Dorsolateral prefrontal cortex (tissue), 120 donors: ENCODE measurements at regions of chr2 and their contacts with region 1.

Region 1: GRCh38 chr2:26846328-26847306 is 1.3 kb upstream of the DPYSL5 start:
- DNase-seq: peak; percentile 72 to 89 (median 82)
- H3K4me3 ChIP-seq: peak overlapping the region in 57 of 59 donors; percentile 0 to 85 (median 73)
- H3K27ac ChIP-seq: peak overlapping the region in 57 of 59 donors; percentile 19 to 93 (median 85)
- H3K27me3 ChIP-seq: peaks cover 0 to 33% (median 4%) of the 10 kb centered on the region in 45 donors
- CTCF ChIP-seq: peak; percentile 72 to 98 (median 90)

Region 2: GRCh38 chr2:26816893-26817292 is 29.7 kb before region 1 on chr2:
- intact Hi-C with region 1: no loop called
- DNase-seq: no peak
- H3K4me3 ChIP-seq: no peak overlapping the region
- H3K27ac ChIP-seq: no peak overlapping the region
- H3K27me3 ChIP-seq: peaks cover 0 to 1% (median 0%) of the 10 kb centered on the region in 45 donors
- CTCF ChIP-seq: no peak

Region 3: GRCh38 chr2:26922405-26923188 is 76.0 kb after region 1 on chr2:
- intact Hi-C with region 1: loop called (anchors 2 kb)
- DNase-seq: peak; percentile 67 to 91 (median 84)
- H3K4me3 ChIP-seq: peak overlapping the region in 12 of 59 donors; percentile 2 to 41 (median 12)
- H3K27ac ChIP-seq: peak overlapping the region in 55 of 59 donors; percentile 11 to 94 (median 69)
- H3K27me3 ChIP-seq: no peaks in the 10 kb centered on the region
- CTCF ChIP-seq: peak; percentile 37 to 89 (median 78)

Region 4: GRCh38 chr2:26942543-26943295 is 96.1 kb after region 1 on chr2:
- intact Hi-C with region 1: loop called (anchors 1 to 2 kb)
- DNase-seq: peak; percentile 72 to 90 (median 80)
- H3K4me3 ChIP-seq: no peak overlapping the region
- H3K27ac ChIP-seq: peak overlapping the region in 15 of 59 donors; percentile 11 to 64 (median 43)
- H3K27me3 ChIP-seq: no peaks in the 10 kb centered on the region
- CTCF ChIP-seq: peak; percentile 77 to 95 (median 90)

Region 5: DNA sequence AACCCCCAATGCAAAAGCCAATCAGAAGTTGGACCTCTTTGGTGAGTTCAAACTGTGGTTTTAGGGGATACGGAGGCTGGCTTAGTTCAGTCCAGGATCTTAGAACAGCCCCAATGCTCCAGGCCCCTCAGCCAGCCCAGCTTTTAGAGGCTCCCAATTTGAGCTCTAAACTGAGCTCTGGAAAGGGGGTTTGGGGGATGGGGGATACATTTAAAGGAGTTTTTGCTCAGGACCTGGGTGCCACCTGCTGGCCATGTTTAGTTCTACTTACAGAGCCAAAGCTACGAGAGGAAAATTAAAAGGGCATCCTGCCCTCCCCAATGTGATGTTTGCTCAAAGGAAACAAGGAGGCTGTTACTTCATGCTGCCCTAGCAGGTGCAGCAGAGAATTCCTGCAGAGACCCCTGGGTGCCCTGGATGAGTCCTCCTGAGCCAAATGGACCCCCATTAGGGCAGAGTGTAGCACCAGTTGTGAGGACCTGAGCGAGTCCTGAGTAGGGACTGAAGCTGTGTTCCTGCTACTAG is 170.2 kb after region 1 on chr2:
- intact Hi-C with region 1: loop called (anchors 2 to 10 kb)
- DNase-seq: peak in 6 of 10 donors; percentile 28 to 67 (median 56)
- H3K4me3 ChIP-seq: no peak overlapping the region
- H3K27ac ChIP-seq: no peak overlapping the region
- H3K27me3 ChIP-seq: no peaks in the 10 kb centered on the region
- CTCF ChIP-seq: peak; percentile 47 to 85 (median 75)

Region 6: GRCh38 chr2:27291865-27292264 is 445.2 kb after region 1 on chr2:
- intact Hi-C with region 1: loop called in 1 of 2 experiments (anchors 10 kb)
- DNase-seq: no peak
- H3K4me3 ChIP-seq: no peak overlapping the region
- H3K27ac ChIP-seq: no peak overlapping the region
- H3K27me3 ChIP-seq: peaks cover 0 to 11% (median 0%) of the 10 kb centered on the region in 45 donors
- CTCF ChIP-seq: no peak